ENCODE measurements at regions of chr16 and their contacts with region 1.

Region 1: DNA sequence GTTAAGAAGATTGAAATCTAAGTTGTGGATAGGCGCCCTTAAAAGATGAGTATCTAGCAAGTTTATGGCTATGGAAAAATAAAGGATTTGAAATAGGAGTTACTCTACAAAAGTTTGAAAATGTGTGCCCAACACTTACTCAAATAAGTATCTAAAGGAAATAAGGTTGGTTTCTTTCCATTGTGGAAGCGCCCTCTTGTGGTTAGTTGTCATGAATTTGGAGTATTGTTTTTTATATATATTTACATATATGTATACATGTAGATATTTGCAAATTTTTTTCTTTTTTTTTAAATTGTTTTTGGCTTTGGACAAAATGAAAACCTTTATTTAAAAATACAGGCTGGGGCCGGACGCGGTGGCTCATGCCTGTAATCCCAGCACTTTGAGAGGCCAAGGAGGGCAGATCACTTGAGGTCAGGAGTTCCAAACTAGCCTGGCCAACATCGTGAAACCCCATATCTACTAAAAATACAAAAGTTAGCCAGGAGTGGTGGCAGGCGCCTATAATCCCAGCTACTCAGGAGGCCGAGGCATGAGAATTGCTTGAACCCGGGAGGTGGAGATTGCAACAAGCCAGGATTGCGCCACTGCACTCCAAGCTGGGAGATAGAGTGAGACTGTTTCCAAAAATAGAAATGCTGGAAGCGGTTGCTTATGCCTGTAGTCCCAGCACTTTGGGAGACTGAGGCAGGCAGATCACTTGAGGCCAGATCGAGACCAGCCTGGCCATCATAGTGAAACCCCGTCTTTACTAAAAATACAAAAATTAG is 24.0 kb upstream of the VPS4A start:
- DNase-seq: peak; percentile 54 to 58
- ATAC-seq: peak; percentile 68 to 92 (median 72)
- H3K4me3 ChIP-seq: no peak overlapping the region
- H3K27ac ChIP-seq: peak overlapping the region in 4 of 10 donors; percentile 18 to 48 (median 42)
- H3K4me1 ChIP-seq: peaks cover 0 to 16% (median 10%) of the 10 kb centered on the region in 9 donors
- H3K27me3 ChIP-seq: no peaks in the 10 kb centered on the region
- CTCF ChIP-seq: peak; percentile 61 to 82 (median 71)

Region 2: DNA sequence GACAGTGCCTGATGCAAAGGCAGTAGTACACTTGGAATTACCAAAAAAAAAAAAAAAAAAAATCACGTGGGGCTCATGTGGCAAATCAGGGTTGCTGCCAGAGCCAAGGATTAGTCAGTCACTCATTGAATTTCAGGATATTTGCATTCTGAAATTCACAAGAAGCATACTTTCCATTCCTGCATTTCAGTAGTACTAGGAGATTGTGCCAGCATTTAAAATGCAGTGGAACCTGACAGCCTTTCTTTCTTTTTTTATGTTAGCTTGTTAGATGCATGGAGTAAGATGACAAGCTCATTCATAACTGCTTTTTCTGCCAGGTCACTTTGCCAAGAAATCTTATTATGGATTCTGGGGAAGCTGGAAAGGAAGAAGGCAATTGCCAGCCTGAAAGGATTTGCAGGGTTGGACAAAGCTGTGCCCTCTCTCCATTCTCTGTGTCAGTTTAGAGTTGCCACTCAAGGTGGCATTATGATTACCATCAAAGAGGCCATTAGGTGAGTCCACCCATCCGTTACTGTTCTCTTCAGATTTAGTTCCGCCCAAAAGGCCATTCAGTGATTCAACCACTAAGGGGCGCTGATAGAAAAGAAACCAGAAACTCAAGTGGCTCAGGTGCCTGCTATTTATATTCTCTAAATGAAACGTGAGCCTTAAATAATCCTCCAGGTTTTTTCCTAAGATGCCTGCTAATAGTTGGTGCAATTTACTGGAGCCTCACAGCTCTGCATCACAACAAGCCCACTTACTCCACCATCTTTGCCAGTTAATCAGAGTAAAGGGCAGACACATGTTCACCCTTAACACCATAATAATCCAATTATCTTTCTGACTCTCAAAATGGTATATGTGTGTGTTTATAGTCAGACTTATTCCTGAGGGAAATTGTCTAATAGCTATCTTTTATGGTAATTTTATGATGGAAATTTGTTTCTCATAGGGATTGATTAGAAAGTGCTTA is 384.8 kb before region 1 on chr16:
- intact Hi-C with region 1: loop called in 1 of 10 experiments (anchors 10 kb)
- DNase-seq: peak in 1 of 2 donors; percentile 16
- ATAC-seq: peak in 4 of 8 donors; percentile 35 to 67 (median 51)
- H3K4me3 ChIP-seq: no peak overlapping the region
- H3K27ac ChIP-seq: no peak overlapping the region
- H3K4me1 ChIP-seq: peaks cover 0 to 19% (median 0%) of the 10 kb centered on the region in 9 donors
- H3K27me3 ChIP-seq: no peaks in the 10 kb centered on the region
- CTCF ChIP-seq: peak; percentile 30 to 74 (median 70)

Region 3: DNA sequence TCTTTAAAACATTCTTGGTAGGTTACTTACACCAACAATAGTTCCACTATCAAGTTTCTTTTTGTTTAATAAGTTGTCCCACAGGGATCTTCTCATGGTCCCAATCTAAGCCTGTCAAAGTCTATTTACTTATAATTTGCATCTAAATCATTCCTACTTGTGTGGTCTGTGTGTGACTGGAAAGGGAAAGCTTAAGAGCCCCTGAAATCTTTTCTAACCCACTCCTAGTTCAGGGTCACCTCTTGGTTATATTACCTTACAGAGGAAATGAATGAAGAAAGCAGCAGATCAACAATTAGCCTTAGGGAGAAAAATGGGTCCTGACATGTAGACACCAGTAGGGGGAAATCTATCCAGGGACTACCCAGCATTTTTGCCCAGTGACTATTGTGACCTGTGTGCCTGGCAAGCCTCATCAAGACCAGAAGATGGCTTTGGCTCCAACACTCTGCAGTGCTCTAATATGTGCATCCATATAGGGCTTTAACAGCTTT is 292.1 kb before region 1 on chr16:
- intact Hi-C with region 1: no loop called
- DNase-seq: no peak
- ATAC-seq: peak in 1 of 8 donors; percentile 55
- H3K4me3 ChIP-seq: no peak overlapping the region
- H3K27ac ChIP-seq: no peak overlapping the region
- H3K4me1 ChIP-seq: peaks cover 0 to 12% (median 0%) of the 10 kb centered on the region in 9 donors
- H3K27me3 ChIP-seq: no peaks in the 10 kb centered on the region
- CTCF ChIP-seq: peak in 7 of 9 donors; percentile 15 to 38 (median 32)

Region 4: GRCh38 chr16:69150146-69150865 is 136.8 kb before region 1 on chr16:
- intact Hi-C with region 1: loop called (anchors 1 to 5 kb)
- DNase-seq: peak in 1 of 2 donors; percentile 75
- ATAC-seq: peak; percentile 62 to 89 (median 81)
- H3K4me3 ChIP-seq: no peak overlapping the region
- H3K27ac ChIP-seq: no peak overlapping the region
- H3K4me1 ChIP-seq: no peaks in the 10 kb centered on the region
- H3K27me3 ChIP-seq: no peaks in the 10 kb centered on the region
- CTCF ChIP-seq: peak; percentile 64 to 90 (median 83)

Region 5: DNA sequence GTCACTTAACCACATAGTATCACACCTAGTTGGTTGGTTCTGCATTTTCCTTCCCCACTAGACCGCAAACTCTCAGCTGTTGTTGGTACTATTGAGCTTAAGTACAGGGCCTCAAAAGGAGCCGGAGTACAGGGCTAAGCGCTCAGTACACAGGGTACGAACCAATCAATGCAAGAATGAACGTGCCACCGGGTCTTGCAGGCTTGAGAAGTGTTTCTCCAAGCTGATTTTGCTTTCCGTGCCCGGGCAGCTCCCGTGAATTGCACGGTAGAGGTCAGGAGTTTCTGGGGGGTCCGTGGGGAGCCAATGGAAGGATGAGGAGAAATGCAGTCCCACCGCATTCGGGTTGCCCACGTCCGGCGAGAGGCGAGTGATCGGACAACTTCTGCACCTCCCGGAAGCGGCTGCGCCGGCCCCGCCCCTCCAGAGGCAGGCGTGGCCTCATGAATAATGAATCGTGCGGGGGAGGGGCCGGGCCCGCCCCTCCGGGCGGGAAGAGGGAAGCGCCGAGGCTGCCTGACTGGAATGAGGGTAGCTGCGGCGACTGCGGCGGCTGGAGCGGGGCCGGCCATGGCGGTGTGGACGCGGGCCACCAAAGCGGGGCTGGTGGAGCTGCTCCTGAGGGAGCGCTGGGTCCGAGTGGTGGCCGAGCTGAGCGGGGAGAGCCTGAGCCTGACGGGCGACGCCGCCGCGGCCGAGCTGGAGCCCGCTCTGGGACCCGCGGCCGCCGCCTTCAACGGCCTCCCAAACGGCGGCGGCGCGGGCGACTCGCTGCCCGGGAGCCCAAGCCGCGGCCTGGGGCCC is 100.3 kb before region 1 on chr16 and contains the start of gene SNTB2:
- intact Hi-C with region 1: loop called in 1 of 10 experiments (anchors 10 kb)
- DNase-seq: peak; percentile 92 to 94
- ATAC-seq: peak; percentile 96 to 99 (median 99)
- H3K4me3 ChIP-seq: peak within 1 kb of the TSS; percentile 61 to 90 (median 78)
- H3K27ac ChIP-seq: peak within 1 kb of the TSS; percentile 78 to 91 (median 86)
- H3K4me1 ChIP-seq: peaks cover 0 to 49% (median 28%) of the 10 kb centered on the region in 9 donors
- H3K27me3 ChIP-seq: no peaks in the 10 kb centered on the region
- CTCF ChIP-seq: no peak
- total RNA-seq, gene SNTB2: 8.1 to 15.7 (median 9.5) TPM

Measured in heart right ventricle (tissue), 16 donors.